ENCODE measurements at regions of chr5 and their contacts with region 1.

Region 1: DNA sequence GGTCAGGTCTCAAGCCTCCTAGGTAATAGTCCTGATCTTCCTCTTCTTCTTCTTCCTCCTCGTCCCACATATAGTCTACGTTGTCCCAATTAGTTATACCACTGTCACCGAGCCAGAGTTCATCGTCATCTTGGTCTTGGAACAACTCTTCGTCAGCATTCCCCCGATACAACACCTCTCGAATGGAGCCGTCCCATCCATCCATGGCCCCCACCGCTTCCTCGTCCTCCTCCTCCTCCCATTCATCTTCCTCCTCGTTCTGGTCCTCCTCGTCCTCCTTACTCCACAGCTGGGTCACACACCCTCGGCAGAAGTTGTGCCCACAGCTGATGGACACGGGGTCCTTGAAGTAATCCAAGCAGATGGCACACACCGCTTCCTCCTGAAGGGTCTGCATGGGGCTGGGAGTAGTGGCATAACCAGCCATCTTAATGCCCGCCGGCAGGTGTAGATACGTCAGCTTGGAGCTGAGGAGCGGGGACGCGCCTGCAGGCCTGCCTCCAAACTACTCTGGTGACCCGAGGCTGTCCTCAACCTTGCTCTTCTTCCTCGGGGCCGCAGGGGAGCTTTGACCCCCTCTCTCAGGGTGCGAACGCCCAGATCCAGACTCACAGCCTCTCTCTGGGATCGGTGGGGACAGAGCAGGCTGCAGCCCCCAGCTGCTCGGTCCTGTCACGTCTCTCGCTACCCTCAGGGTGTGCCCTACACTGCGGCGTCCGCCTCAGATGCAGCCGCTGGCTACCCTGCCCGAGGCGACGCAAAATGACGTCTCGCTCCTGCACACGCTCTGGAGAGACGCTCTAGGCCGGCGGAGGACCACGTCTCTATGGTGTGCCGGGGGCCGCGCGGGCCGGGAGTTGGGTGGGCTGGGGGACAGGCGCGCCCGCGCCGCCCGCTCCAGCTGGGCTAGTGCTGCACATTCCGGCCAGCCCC is at the start of gene TRIM52:
- H3K4me3 Mint-ChIP-seq: peak within 1 kb of the TSS; percentile 85
- H3K27ac Mint-ChIP-seq: peak within 1 kb of the TSS; percentile 90
- H3K4me1 Mint-ChIP-seq: peaks cover 41% of the 10 kb centered on the region
- H3K27me3 Mint-ChIP-seq: no peaks in the 10 kb centered on the region

Region 2: GRCh38 chr5:180868960-180869359 is 391.7 kb before region 1 on chr5:
- intact Hi-C with region 1: loop called (anchors 5 kb)
- H3K4me3 Mint-ChIP-seq: no peak overlapping the region
- H3K27ac Mint-ChIP-seq: no peak overlapping the region
- H3K4me1 Mint-ChIP-seq: peaks cover 26% of the 10 kb centered on the region
- H3K27me3 Mint-ChIP-seq: peaks cover 13% of the 10 kb centered on the region

Region 3: DNA sequence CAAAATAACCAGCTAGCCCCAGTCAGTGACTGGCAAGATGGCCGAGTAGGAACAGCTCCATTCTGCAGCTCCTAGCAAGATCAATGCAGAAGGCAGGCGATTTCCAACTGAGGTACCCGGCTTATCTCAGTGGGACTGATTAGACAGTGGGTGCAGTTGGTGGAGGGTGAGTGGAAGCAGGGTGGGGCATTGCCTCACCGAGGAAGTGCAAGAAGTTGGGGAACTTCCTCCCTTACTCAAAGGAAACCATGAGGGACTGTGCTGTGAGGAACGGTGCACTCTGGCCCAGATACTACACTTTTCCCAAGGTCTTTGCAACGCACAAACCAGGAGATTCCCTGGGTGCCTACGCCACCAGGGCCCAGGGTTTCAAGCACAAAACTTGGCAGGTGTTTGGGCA is 371.3 kb before region 1 on chr5:
- intact Hi-C with region 1: no loop called
- H3K4me3 Mint-ChIP-seq: no peak overlapping the region
- H3K27ac Mint-ChIP-seq: no peak overlapping the region
- H3K4me1 Mint-ChIP-seq: peaks cover 9% of the 10 kb centered on the region
- H3K27me3 Mint-ChIP-seq: peaks cover 46% of the 10 kb centered on the region

Region 4: DNA sequence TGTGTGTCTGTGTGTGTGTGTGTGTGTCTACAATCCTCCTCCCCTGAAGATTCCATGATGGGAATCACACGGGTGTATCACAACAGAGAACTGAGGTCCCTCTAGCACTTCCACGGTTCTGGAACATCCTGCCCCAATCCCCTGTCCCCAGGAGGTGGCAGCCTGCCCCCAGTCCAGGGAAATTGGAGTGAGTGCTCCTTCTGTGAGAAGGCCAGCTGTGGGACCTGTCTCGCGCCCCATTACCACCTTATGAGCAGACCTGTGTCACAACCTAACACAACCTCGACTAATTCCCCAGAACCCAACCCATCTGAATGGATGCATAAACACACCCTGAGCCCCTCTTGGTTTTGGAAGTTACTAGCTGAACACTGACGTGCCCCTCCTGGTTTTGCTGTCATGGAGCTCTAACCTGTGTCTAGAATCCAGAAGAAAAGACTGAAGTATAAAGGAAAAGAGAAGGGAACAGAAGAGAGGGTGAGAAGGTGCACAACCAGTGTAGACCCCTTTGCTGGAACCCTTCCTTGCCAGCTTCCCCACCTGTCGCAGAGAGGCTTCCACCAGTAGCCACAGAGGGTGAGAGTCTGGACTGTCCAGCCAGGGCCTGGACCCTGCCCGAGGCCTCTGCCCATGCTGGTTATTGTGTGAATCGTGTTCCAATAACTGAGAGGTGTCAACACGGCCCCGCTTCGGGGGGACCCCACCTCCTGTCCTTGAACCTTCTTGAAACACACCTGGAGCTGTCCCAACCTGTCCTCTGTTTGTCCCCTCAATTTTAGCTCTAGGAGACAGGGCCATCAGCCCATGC is 217.2 kb before region 1 on chr5:
- intact Hi-C with region 1: no loop called
- H3K4me3 Mint-ChIP-seq: no peak overlapping the region
- H3K27ac Mint-ChIP-seq: no peak overlapping the region
- H3K4me1 Mint-ChIP-seq: no peaks in the 10 kb centered on the region
- H3K27me3 Mint-ChIP-seq: peaks cover 29% of the 10 kb centered on the region

Region 5: GRCh38 chr5:181109489-181110013 is 151.1 kb before region 1 on chr5:
- intact Hi-C with region 1: no loop called
- H3K4me3 Mint-ChIP-seq: no peak overlapping the region
- H3K27ac Mint-ChIP-seq: no peak overlapping the region
- H3K4me1 Mint-ChIP-seq: peaks cover 15% of the 10 kb centered on the region
- H3K27me3 Mint-ChIP-seq: peaks cover 73% of the 10 kb centered on the region

Region 6: GRCh38 chr5:181191529-181192394 is 68.9 kb before region 1 on chr5:
- intact Hi-C with region 1: loop called (anchors 5 kb)
- H3K4me3 Mint-ChIP-seq: peak overlapping the region; percentile 99
- H3K27ac Mint-ChIP-seq: peak overlapping the region; percentile 99
- H3K4me1 Mint-ChIP-seq: peaks cover 58% of the 10 kb centered on the region
- H3K27me3 Mint-ChIP-seq: peaks cover 21% of the 10 kb centered on the region

Region 7: DNA sequence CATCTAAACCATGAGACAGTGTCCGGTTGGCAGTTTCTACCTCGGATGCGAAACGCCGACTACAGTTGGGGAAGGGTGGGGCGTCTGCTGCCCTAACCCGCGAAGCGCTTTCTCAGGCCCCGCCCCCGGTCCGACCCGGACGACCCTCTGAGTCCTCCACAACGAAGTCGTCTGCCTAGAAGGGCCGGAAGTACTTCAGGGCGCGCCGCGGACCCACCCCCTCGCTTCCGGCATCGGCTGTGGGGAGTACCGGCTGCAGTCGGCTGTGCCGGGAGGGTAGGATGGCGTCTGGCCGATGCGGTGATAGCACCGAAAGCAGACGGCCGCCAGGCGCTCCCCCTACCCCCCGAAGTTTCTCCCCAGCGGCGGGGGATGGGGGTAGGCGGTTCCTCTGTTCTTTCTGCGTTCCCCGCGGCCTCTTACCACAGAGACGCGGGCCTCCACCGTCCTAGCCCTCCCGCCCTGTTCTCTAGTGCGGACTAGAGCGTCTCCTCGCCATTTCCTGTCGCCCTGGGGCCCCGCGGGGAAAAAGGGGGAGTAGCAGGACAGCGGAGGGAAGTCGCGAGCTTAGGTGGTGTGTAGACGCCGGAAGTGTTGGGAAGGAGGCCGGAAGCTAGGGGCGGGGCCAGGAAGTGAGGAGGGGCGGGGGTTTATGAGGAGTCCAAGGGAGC is 37.5 kb before region 1 on chr5 and contains the start of gene TRIM41:
- intact Hi-C with region 1: loop called (anchors 5 kb)
- H3K4me3 Mint-ChIP-seq: peak within 1 kb of the TSS; percentile 82
- H3K27ac Mint-ChIP-seq: peak within 1 kb of the TSS; percentile 93
- H3K4me1 Mint-ChIP-seq: peaks cover 47% of the 10 kb centered on the region
- H3K27me3 Mint-ChIP-seq: peaks cover 3% of the 10 kb centered on the region